ENCODE measurements at regions of chr4 and their contacts with region 1.

Region 1: DNA sequence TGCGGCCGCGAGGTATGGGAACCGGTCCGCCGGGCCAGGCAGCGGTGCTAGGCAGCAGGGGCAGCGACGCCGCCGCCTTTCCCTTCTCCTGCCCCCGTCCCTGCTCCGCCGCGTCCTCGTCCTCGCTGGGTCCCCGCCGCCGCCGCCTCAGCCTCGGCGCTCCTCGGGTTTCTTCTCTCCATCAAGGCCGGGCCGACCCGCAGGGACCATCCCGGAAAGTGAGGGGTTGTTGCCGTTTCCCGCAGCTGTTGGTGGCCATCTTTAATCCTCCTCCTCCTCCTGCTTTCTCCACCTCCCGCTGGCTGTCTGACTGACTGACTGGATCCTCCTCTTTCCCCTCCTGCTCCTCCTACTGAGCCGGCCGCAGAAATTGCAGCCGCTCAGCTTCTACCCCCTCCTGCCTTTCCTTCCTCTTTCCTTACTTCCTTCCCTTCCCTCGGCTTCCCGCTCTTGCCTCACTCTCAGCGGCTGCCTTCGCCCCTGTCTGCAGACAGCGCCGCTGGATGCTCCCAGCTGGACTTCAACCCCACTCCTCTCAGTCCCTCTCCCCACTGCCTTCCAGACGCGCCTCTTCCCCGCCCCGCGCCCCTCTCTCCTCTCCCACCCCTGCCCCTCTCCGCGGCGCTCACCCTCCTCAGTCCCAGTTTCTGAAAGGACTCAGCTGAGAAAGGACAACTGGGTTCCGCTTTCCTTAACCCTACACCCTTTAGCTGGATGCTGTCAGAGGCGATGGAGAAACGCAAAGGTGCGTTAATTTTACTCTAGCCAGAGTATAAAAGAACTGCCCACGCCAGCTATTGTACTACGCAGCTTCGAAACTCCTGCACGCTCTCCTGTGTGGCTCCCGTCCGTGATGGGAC is at the start of gene WDFY3:
- DNase-seq: peak; percentile 81
- H3K4me3 ChIP-seq: peak within 1 kb of the TSS; percentile 60 to 96 (median 82)
- H3K27ac ChIP-seq: peak within 1 kb of the TSS; percentile 93 to 94 (median 94)
- H3K4me1 ChIP-seq: peaks cover 6 to 33% (median 14%) of the 10 kb centered on the region in 4 donors
- H3K27me3 ChIP-seq: no peaks in the 10 kb centered on the region
- CTCF ChIP-seq: no peak
- EP300 ChIP-seq: no peak
- POLR2A ChIP-seq: peak; percentile 69
- total RNA-seq, gene WDFY3: 58.8 to 449 (median 69.2) TPM

Region 2: GRCh38 chr4:84740057-84740456 is 226.6 kb before region 1 on chr4:
- in situ Hi-C with region 1: loop called in 1 of 4 experiments (anchors 10 kb)
- intact Hi-C with region 1: no loop called
- DNase-seq: no peak
- H3K4me3 ChIP-seq: no peak overlapping the region
- H3K27ac ChIP-seq: no peak overlapping the region
- H3K4me1 ChIP-seq: no peaks in the 10 kb centered on the region
- H3K27me3 ChIP-seq: no peaks in the 10 kb centered on the region
- CTCF ChIP-seq: no peak
- EP300 ChIP-seq: no peak
- POLR2A ChIP-seq: no peak

Region 3: GRCh38 chr4:84750253-84750959 is 216.2 kb before region 1 on chr4:
- in situ Hi-C with region 1: loop called (anchors 10 to 25 kb)
- intact Hi-C with region 1: loop called (anchors 2 kb)
- DNase-seq: no peak
- H3K4me3 ChIP-seq: no peak overlapping the region
- H3K27ac ChIP-seq: no peak overlapping the region
- H3K4me1 ChIP-seq: no peaks in the 10 kb centered on the region
- H3K27me3 ChIP-seq: no peaks in the 10 kb centered on the region
- CTCF ChIP-seq: peak; percentile 46 to 69 (median 63)
- EP300 ChIP-seq: no peak
- POLR2A ChIP-seq: no peak

Measured in transverse colon (tissue), 4 donors.